Natural killer cell (primary cell): ENCODE measurements at regions of chr20 and their contacts with region 1.

Region 1: DNA sequence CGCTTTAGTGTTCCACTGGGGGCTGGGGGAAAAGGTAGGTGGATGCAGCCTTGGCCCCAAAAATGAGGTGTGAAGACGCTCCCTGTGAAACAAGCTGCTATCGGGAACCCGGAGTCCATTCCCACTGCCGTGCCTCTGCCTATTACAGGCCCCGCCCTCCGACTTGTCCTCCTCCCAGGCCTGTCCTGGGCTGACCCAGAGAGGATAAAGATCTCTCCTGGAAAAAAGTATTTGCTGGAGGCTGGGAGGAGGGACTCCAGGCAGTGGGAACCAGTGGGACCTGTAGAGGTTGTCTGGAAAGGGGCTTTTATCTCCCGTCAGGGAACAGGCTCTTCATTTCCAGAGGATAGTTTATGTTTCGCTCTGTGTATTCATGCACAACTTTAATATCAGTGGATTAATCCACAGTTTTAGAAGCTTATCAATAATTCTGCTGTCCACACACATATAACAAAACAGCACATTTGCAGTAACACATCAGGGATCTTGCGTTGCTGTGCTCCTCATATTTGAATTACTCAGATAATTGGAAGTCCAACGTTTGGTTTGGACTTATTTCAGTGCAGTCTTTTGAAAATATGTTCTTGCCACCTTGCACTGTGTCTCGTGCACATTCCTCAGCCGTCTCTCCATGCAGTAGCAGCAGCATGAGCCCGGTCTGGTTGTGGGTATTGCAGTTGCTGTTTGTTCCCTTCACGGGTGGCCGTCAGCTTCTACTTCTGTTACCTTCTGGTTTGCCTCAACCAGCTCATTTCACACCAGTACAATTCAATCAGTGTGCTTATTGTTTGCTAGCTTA is 215.3 kb downstream of the SLC24A3 start:
- DNase-seq: no peak
- ATAC-seq: no peak
- H3K4me3 ChIP-seq: no peak overlapping the region
- H3K4me3 Mint-ChIP-seq: no peak overlapping the region
- H3K27ac ChIP-seq: no peak overlapping the region
- H3K27ac Mint-ChIP-seq: no peak overlapping the region
- H3K4me1 ChIP-seq: no peaks in the 10 kb centered on the region
- H3K4me1 Mint-ChIP-seq: peaks cover 9 to 12% of the 10 kb centered on the region in 2 donors
- H3K27me3 ChIP-seq: peaks cover 2% of the 10 kb centered on the region
- H3K27me3 Mint-ChIP-seq: peaks cover 6 to 8% of the 10 kb centered on the region in 2 donors
- CTCF ChIP-seq: no peak

Region 2: GRCh38 chr20:19368351-19368750 is 59.4 kb before region 1 on chr20:
- intact Hi-C with region 1: loop called (anchors 10 kb)
- DNase-seq: no peak
- ATAC-seq: peak in 1 of 3 donors; percentile 24
- H3K4me3 ChIP-seq: no peak overlapping the region
- H3K4me3 Mint-ChIP-seq: no peak overlapping the region
- H3K27ac ChIP-seq: no peak overlapping the region
- H3K27ac Mint-ChIP-seq: no peak overlapping the region
- H3K4me1 ChIP-seq: no peaks in the 10 kb centered on the region
- H3K4me1 Mint-ChIP-seq: no peaks in the 10 kb centered on the region
- H3K27me3 ChIP-seq: no peaks in the 10 kb centered on the region
- H3K27me3 Mint-ChIP-seq: no peaks in the 10 kb centered on the region
- CTCF ChIP-seq: no peak